Heart left ventricle (tissue), 16 donors: ENCODE measurements at regions of chr1 and their contacts with region 1.

Region 1: DNA sequence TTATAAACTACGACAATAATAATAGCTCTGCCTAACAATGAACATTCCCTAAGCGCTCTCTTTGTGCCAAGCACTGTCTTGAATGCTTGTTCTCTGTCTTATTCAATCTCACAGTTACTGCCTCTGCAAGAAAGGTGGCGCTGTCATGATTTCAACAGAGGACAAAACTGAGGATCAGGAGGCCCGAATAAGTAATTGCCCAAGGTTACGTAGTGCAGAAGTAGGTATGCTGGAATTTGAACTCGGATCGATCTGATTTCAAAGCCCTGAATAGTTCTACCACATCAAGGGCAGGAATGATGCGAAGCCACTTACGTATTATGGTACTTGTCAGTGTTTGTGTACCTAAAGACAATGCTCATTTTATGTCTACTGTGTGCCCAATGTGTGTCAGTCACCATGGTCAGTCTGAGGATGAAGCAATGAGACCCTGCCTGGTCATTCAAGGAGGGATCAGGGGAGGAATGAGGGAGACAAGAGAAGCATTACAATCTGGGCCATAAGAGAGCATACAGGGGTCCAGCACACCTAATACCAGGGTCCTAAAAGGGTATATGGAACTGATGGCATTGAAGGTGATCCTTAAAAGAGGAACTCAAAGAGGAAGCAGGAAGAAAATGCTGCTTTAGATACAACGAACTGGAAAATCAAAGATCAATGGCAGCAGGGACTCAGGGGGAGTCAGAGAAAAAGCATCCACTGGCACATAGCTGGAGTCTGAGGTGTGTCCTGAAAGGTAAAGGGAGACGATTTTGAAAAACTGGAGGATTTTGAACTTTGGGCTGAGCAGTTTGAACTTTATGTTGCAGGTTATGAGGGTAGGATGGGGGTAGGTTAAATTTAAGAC is 389.2 kb downstream of the PLPP3 start:
- DNase-seq: peak in 2 of 5 donors; percentile 20 to 38
- ATAC-seq: peak in 3 of 4 donors; percentile 57 to 86 (median 59)
- H3K4me3 ChIP-seq: no peak overlapping the region
- H3K27ac ChIP-seq: peak overlapping the region in 3 of 12 donors; percentile 19 to 40 (median 20)
- H3K4me1 ChIP-seq: peaks cover 0 to 20% (median 11%) of the 10 kb centered on the region in 12 donors
- H3K27me3 ChIP-seq: no peaks in the 10 kb centered on the region
- CTCF ChIP-seq: peak in 11 of 12 donors; percentile 25 to 67 (median 52)
- POLR2A ChIP-seq: no peak

Region 2: DNA sequence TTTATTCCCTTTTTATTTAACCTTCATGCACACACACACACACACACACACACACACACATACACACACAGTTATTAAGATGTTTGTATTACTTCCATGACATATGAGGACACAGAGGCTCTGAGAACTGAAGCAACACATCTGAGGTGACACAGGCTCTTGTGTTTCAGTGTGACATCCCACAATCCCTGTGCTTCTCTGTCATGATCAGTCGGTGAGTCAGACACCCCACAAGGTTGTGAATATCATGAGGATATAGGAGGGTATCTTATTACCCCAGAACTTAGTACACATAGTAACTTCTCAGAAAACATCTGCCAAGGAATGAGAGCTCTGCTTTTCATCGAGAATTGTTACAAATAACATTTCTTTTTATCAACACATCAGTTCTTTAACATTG is 70.1 kb before region 1 on chr1:
- intact Hi-C with region 1: no loop called
- DNase-seq: no peak
- ATAC-seq: no peak
- H3K4me3 ChIP-seq: no peak overlapping the region
- H3K27ac ChIP-seq: no peak overlapping the region
- H3K4me1 ChIP-seq: no peaks in the 10 kb centered on the region
- H3K27me3 ChIP-seq: no peaks in the 10 kb centered on the region
- CTCF ChIP-seq: no peak
- POLR2A ChIP-seq: no peak

Region 3: GRCh38 chr1:56133522-56134472 is 56.4 kb before region 1 on chr1:
- intact Hi-C with region 1: loop called in 1 of 10 experiments (anchors 5 kb)
- DNase-seq: no peak
- ATAC-seq: peak in 1 of 4 donors; percentile 18
- H3K4me3 ChIP-seq: no peak overlapping the region
- H3K27ac ChIP-seq: peak overlapping the region in 1 of 12 donors; percentile 26
- H3K4me1 ChIP-seq: peaks cover 0 to 25% (median 9%) of the 10 kb centered on the region in 12 donors
- H3K27me3 ChIP-seq: no peaks in the 10 kb centered on the region
- CTCF ChIP-seq: no peak
- POLR2A ChIP-seq: no peak

Region 4: GRCh38 chr1:56284928-56285327 is 94.8 kb after region 1 on chr1:
- intact Hi-C with region 1: loop called in 4 of 10 experiments (anchors 5 to 10 kb)
- DNase-seq: peak in 3 of 5 donors; percentile 22 to 27 (median 24)
- ATAC-seq: peak in 3 of 4 donors; percentile 33 to 74 (median 56)
- H3K4me3 ChIP-seq: no peak overlapping the region
- H3K27ac ChIP-seq: peak overlapping the region in 7 of 12 donors; percentile 6 to 62 (median 36)
- H3K4me1 ChIP-seq: peaks cover 0 to 31% (median 12%) of the 10 kb centered on the region in 12 donors
- H3K27me3 ChIP-seq: no peaks in the 10 kb centered on the region
- CTCF ChIP-seq: no peak
- POLR2A ChIP-seq: no peak

Region 5: GRCh38 chr1:56376188-56376984 is 186.2 kb after region 1 on chr1:
- intact Hi-C with region 1: loop called in 2 of 10 experiments (anchors 10 kb)
- DNase-seq: peak; percentile 37 to 66 (median 60)
- ATAC-seq: peak in 3 of 4 donors; percentile 39 to 64 (median 49)
- H3K4me3 ChIP-seq: no peak overlapping the region
- H3K27ac ChIP-seq: peak overlapping the region; percentile 18 to 78 (median 66)
- H3K4me1 ChIP-seq: peaks cover 0 to 63% (median 47%) of the 10 kb centered on the region in 12 donors
- H3K27me3 ChIP-seq: no peaks in the 10 kb centered on the region
- CTCF ChIP-seq: no peak
- POLR2A ChIP-seq: no peak

Region 6: GRCh38 chr1:56409094-56409691 is 219.0 kb after region 1 on chr1:
- intact Hi-C with region 1: loop called in 1 of 10 experiments (anchors 10 kb)
- DNase-seq: peak in 1 of 5 donors; percentile 43
- ATAC-seq: no peak
- H3K4me3 ChIP-seq: no peak overlapping the region
- H3K27ac ChIP-seq: no peak overlapping the region
- H3K4me1 ChIP-seq: peaks cover 0 to 36% (median 14%) of the 10 kb centered on the region in 12 donors
- H3K27me3 ChIP-seq: no peaks in the 10 kb centered on the region
- CTCF ChIP-seq: peak in 11 of 12 donors; percentile 19 to 40 (median 30)
- POLR2A ChIP-seq: no peak

Region 7: GRCh38 chr1:56745231-56745630 is 555.1 kb after region 1 on chr1:
- intact Hi-C with region 1: no loop called
- DNase-seq: no peak
- ATAC-seq: no peak
- H3K4me3 ChIP-seq: no peak overlapping the region
- H3K27ac ChIP-seq: no peak overlapping the region
- H3K4me1 ChIP-seq: no peaks in the 10 kb centered on the region
- H3K27me3 ChIP-seq: no peaks in the 10 kb centered on the region
- CTCF ChIP-seq: no peak
- POLR2A ChIP-seq: no peak